A549 (cell line): ENCODE measurements at regions of chr1 and their contacts with region 1.

Region 1: DNA sequence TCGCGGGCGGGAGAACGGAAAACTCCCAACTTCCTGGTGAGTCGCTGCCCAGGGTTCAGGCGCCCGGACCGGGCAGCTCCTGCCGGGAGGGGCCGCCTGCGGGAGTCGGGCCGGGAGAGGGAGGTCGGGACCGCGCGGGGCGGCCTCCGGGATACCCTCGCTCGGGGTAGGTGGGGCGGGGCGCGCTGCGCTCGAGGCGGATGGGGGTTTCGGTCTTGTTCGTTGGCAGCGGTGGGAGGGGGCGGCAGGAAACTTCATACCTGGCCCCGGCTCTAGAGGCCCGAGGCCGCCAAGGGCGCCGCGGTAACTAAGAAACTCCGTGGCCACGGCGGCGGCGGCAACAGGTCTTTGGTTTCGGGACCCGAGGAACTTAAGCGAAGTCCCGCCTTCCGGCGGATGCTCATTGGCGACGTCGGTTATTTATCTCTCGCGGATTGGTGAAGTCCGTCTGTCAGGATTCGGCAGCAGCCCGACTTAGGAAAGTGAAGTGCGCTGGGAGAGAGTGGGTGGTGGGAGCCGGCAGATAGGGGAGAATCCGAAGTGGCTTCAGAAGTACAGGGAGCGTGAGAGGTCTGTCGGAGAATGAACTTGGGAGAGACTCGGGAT is 546 bp downstream of the NEK7 start:
- DNase-seq: peak; percentile 89 to 94
- ATAC-seq: peak; percentile 71 to 79
- H3K4me3 ChIP-seq: peak overlapping the region; percentile 96
- H3K27ac ChIP-seq: peak overlapping the region; percentile 94 to 97
- H3K4me1 ChIP-seq: peaks cover 50% of the 10 kb centered on the region
- CTCF ChIP-seq: no peak
- EP300 ChIP-seq: no peak
- POLR2A ChIP-seq: peak; percentile 7; the same call in 1 of the 2 replicates
- RAD21 ChIP-seq: no peak

Region 2: GRCh38 chr1:198088360-198089071 is 68.8 kb before region 1 on chr1:
- CTCF ChIA-PET with region 1: interaction called, 12 read pairs
- POLR2A ChIA-PET with region 1: no interaction called
- DNase-seq: peak; percentile 23 to 29
- ATAC-seq: peak; percentile 59 to 72; a peak in 4 of 6 replicates
- H3K4me3 ChIP-seq: no peak overlapping the region
- H3K27ac ChIP-seq: peak overlapping the region in 1 of 2 experiments; percentile 29; a peak in 1 of 6 replicates
- H3K4me1 ChIP-seq: 0 out of 3 replicates have a peak, but pooled peaks cover 3% of the 10 kb centered on the region
- CTCF ChIP-seq: peak; percentile 73
- EP300 ChIP-seq: no peak
- POLR2A ChIP-seq: no peak
- RAD21 ChIP-seq: peak; percentile 70 to 73

Region 3: DNA sequence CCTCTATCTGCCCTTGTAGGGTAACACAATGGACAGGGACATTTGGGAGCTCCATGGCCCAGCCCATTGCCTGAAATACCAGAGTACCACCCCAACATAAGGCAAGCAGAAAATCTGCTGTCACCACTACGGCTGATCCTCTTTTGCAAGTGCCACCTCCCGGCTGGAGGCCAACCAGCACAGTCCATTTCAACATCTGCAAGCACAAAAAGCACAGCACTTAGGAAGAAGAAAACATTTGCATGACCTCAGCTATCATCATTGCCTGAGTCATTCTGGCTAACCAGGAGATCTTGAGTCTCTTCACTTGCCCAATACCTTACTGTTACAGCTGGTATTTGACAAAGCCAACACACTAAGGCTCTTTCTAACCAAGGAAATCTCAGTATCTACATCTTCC is 55.3 kb after region 1 on chr1:
- CTCF ChIA-PET with region 1: no interaction called
- POLR2A ChIA-PET with region 1: no interaction called
- DNase-seq: peak in 1 of 2 experiments; percentile 6
- ATAC-seq: no peak
- H3K4me3 ChIP-seq: no peak overlapping the region
- H3K27ac ChIP-seq: no peak overlapping the region
- H3K4me1 ChIP-seq: no peaks in the 10 kb centered on the region
- CTCF ChIP-seq: no peak
- EP300 ChIP-seq: no peak
- POLR2A ChIP-seq: no peak
- RAD21 ChIP-seq: no peak

Region 4: GRCh38 chr1:198307411-198307810 is 150.1 kb after region 1 on chr1:
- CTCF ChIA-PET with region 1: no interaction called
- POLR2A ChIA-PET with region 1: no interaction called
- DNase-seq: no peak
- ATAC-seq: no peak
- H3K4me3 ChIP-seq: no peak overlapping the region
- H3K27ac ChIP-seq: no peak overlapping the region
- H3K4me1 ChIP-seq: no peaks in the 10 kb centered on the region
- CTCF ChIP-seq: no peak
- EP300 ChIP-seq: no peak
- POLR2A ChIP-seq: no peak
- RAD21 ChIP-seq: no peak